ENCODE measurements at regions of chr17 and their contacts with region 1.

Region 1: GRCh38 chr17:37406635-37407461 is at the starts of genes ACACA and TADA2A:
- DNase-seq: peak; percentile 86
- ATAC-seq: peak; percentile 95
- H3K4me3 Mint-ChIP-seq: peak within 1 kb of the TSS; percentile 97
- H3K27ac Mint-ChIP-seq: peak within 1 kb of the TSS; percentile 95
- H3K4me1 Mint-ChIP-seq: peaks cover 44% of the 10 kb centered on the region
- H3K27me3 Mint-ChIP-seq: no peaks in the 10 kb centered on the region
- total RNA-seq, gene ACACA: 45.1 to 45.9 TPM
- total RNA-seq, gene TADA2A: 34.5 to 35.8 TPM

Region 2: DNA sequence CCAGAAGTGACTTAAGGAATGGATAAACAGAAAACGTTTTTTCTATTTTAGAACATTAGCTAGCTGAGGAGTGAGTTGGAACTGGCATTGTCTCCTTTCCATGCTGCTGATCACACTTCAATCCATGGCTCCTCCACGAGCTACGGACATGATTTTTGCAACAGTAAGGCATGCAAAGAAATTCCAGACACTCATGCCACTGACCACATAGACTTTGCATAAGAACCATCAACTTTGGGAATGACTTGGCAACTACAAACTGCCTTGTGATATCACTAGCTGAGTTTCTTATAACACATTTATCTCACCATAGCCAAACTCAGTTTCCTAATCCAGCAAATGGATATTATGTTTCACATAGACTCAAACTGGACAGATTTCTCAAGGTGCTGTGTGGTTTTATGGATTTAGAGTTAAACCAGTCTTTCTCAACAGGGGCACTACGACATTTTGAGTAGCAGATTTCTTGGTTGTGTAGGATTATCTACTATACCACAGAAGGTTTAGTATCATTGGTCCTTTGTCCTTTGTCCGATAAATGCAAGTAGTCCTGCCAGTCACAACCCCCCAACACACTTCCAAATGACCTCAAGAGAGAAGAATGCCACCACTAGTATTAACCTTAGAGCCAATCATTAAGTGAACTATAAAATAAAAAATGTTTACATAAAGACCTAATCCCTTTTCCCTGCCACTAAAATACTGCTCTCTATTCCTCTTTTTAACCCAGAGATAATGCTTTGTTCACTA is 79.3 kb before region 1 on chr17:
- POLR2A ChIA-PET with region 1: no interaction called
- DNase-seq: no peak
- ATAC-seq: no peak
- H3K4me3 Mint-ChIP-seq: no peak overlapping the region
- H3K27ac Mint-ChIP-seq: no peak overlapping the region
- H3K4me1 Mint-ChIP-seq: no peaks in the 10 kb centered on the region
- H3K27me3 Mint-ChIP-seq: no peaks in the 10 kb centered on the region

Region 3: DNA sequence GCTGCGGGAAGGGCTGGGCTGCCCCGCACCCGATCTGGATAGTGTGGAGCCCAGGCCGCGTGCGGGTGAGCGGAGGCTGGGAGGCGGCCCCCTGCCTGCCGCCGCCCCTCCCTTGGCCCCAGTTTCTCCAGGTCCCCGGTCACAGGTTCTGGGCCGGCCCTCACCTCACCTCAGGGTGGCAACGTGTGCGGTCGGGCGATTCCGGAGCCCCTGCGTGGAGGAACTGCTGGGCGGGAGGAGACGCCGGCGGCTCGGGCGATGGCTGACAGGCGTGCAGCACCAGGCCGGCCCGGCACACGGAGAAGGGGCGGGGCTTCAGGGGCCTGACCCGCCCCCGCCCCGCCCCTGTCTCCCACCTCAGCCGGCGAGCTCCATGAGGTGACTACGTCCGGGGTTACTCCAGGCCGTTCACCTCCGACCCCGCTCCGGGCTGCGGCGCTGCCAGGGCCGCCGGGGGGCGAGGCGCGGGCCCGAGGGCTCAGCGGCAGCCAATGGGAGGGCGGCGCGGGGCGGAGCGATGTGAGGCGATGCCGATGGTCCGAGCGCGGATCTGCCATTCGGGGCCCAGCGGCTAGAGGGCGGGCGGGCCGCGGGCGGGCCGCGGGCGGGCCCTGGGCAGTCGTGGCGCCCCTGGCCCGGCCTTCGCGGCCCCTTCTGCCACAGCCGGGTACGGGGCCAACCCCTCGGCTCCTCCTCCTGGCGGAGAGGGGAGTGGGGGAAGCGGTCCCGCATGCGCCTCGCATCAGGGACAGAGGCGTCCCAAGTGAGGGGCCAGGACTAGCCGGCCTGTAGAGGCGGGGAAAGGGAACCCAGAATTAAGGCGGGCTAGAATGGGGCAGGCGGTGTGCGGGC is 47.8 kb before region 1 on chr17:
- POLR2A ChIA-PET with region 1: interaction called, 12 read pairs
- DNase-seq: peak; percentile 98
- ATAC-seq: peak; percentile 97
- H3K4me3 Mint-ChIP-seq: peak overlapping the region; percentile 96
- H3K27ac Mint-ChIP-seq: peak overlapping the region; percentile 86
- H3K4me1 Mint-ChIP-seq: peaks cover 24% of the 10 kb centered on the region
- H3K27me3 Mint-ChIP-seq: no peaks in the 10 kb centered on the region

Region 4: DNA sequence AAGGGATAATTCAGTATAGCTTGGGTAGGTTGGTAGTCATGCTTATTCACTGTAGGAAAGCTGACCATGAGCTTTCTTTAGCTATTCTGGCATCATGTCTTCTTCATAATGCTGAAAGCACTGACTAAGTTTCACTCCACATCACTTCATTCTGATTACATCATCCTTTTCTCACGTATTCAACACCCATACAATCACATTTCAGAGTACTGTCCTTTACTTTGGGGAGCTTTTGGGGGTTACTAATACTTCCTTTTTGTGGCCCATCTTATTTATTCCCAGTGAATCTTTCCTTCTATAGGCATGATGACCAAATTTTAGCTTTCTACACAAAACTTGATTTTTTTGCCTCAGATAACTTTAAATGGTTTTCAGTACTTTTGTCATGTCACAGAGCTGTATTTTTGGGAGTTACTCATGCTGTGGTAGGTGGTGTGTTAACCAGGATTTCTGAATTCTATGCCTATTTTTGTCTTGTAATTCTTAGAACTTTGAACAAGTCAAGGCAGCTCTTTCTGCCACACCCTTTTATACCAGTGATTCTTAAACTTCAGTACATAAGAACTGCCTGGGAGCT is 23.3 kb after region 1 on chr17:
- POLR2A ChIA-PET with region 1: interaction called, 24 read pairs
- DNase-seq: no peak
- ATAC-seq: peak; percentile 90
- H3K4me3 Mint-ChIP-seq: peak overlapping the region; percentile 63
- H3K27ac Mint-ChIP-seq: peak overlapping the region; percentile 88
- H3K4me1 Mint-ChIP-seq: peaks cover 28% of the 10 kb centered on the region
- H3K27me3 Mint-ChIP-seq: no peaks in the 10 kb centered on the region

Region 5: DNA sequence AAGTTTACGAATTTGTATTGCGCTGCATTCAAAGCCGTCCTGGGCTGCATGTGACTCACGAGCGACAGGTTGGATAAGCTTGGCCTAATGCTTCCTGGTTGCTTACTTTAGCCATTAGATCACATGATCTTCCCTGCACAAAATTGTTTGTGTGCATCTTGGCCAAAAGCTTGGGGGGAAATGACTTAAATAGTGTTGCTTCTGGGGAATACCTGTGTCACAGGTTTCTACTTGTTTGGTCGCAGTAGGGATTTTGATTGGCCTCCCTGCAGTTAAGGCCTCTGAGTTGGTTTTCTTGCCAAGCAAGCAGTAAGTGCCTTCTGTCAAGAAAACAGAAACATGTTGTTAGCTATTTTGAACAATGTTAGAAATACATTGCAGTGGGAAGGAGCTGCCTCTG is 43.3 kb after region 1 on chr17:
- POLR2A ChIA-PET with region 1: interaction called, 10 read pairs
- DNase-seq: no peak
- ATAC-seq: no peak
- H3K4me3 Mint-ChIP-seq: no peak overlapping the region
- H3K27ac Mint-ChIP-seq: no peak overlapping the region
- H3K4me1 Mint-ChIP-seq: peaks cover 2% of the 10 kb centered on the region
- H3K27me3 Mint-ChIP-seq: no peaks in the 10 kb centered on the region

Measured in activated naive CD8-positive, alpha-beta T cell treated with anti-CD3 and anti-CD28 coated beads, Interleukin-2, amount 10 ng/mL, durations not matched to agents 7 days and 5 days (primary cell).